ENCODE measurements at regions of chr1 and their contacts with region 1.

Region 1: DNA sequence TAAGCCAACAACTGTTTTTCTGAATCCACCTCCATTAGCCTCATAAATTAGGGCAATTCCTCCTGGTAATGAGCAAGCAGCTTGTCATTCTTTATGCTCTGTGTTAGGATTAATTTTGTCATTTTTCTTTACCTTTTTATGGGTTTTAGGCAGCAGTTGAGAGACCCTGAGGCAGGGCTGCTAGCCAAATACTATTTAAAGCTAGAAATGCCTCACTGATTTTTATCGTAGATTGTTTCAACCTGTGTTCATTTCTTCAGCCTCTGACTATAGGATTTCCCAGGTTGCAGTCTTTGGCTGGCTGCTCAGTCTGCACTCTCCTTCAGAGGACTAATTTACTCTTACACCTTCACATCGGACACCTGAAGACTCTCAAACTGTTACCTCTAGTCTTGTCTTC is 61.9 kb upstream of the RABGAP1L start:
- DNase-seq: no peak
- H3K4me3 ChIP-seq: no peak overlapping the region
- H3K27ac ChIP-seq: no peak overlapping the region
- H3K4me1 ChIP-seq: no peaks in the 10 kb centered on the region
- CTCF ChIP-seq: no peak

Region 2: DNA sequence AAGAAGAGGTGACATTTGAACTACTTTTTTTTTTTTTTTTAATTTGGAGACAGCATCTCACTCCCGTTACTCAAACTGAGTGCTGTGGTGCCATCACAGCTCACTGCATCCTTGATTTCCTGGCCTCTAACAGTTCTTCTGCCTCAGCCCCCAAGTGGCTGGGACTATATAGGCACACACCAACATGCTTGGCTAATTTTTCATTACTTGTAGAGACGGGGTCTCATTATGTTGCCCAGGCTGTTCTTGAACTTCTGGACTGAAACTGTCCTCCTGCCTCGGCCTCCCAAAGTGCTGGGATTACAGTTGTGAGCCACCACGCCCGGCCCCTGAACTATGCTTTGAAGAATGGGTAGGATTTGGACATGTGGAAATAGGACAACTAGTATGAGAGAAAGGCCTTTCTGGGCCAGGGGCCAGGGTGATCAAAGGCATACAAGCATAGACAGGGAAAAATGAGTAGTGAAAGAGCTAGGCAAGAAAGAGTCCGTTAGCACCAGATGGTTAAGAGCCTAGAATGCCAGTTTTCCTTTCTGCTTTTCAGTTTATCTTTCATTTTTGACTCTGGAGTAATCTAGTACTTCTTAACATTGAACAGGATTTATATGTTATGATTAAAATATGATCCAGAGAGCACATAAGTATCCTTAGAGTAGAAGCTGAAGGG is 68.2 kb after region 1 on chr1:
- CTCF ChIA-PET with region 1: no interaction called
- POLR2A ChIA-PET with region 1: no interaction called
- intact Hi-C with region 1: no loop called
- DNase-seq: peak; percentile 59
- H3K4me3 ChIP-seq: peak overlapping the region; percentile 5
- H3K27ac ChIP-seq: peak overlapping the region; percentile 48
- H3K4me1 ChIP-seq: peaks cover 79% of the 10 kb centered on the region
- CTCF ChIP-seq: peak; percentile 60

Region 3: GRCh38 chr1:174743654-174744561 is 646.5 kb after region 1 on chr1:
- CTCF ChIA-PET with region 1: no interaction called
- POLR2A ChIA-PET with region 1: interaction called, 3 read pairs
- intact Hi-C with region 1: loop called (anchors 5 kb)
- DNase-seq: peak; percentile 73
- H3K4me3 ChIP-seq: no peak overlapping the region
- H3K27ac ChIP-seq: no peak overlapping the region
- H3K4me1 ChIP-seq: peaks cover 43% of the 10 kb centered on the region
- CTCF ChIP-seq: peak; percentile 90